ENCODE measurements at regions of chr12 and their contacts with region 1.

Region 1: GRCh38 chr12:31659087-31659933 is at the start of gene ETFBKMT:
- DNase-seq: peak; percentile 96
- H3K4me3 Mint-ChIP-seq: peak within 1 kb of the TSS; percentile 94
- H3K27ac Mint-ChIP-seq: peak within 1 kb of the TSS; percentile 98
- H3K4me1 Mint-ChIP-seq: peaks cover 11% of the 10 kb centered on the region
- H3K27me3 Mint-ChIP-seq: no peaks in the 10 kb centered on the region
- total RNA-seq, gene ETFBKMT: 0.91 to 1.2 TPM

Region 2: DNA sequence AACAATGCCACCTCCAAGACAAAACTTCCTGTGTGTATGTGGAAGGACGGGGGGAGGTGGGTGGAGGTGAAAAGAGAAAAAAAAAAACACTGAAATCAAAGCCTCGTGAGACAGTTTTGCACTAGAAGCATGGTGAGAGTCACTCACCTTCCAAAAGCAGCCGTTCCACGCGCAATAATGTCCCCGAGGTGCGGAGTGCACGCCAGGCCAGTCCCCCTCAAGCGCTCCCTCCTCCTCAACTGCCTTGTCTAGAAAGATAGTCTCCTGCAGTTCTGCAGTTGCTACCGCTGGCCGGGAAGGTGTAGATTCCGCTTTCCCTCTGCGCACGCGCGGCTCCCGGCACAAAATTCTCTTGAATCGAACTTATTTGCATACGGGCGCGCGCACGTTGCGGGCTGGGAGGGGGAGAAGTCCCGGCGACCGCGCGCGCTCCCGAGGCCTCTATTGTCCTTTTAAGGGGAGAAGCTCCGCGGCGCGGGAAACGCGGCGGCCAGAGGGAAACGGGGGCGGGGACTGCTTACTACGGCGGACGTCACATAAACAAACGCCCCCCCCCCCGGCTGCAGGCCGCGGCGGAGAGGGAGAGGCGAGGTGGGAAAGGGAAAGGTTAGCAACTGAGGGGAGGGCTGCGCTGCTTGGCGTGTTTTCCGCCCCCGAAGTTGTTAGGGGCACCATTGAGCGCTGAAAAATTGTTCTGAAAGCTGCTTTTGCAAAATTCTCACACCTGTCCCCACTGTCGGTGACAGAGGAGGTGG is 333.3 kb before region 1 on chr12 and contains the start of gene SINHCAF:
- CTCF ChIA-PET with region 1: no interaction called
- intact Hi-C with region 1: loop called (anchors 1 kb)
- DNase-seq: peak; percentile 99
- H3K4me3 Mint-ChIP-seq: peak within 1 kb of the TSS; percentile 96
- H3K27ac Mint-ChIP-seq: peak within 1 kb of the TSS; percentile 99
- H3K4me1 Mint-ChIP-seq: peaks cover 20% of the 10 kb centered on the region
- H3K27me3 Mint-ChIP-seq: no peaks in the 10 kb centered on the region
- total RNA-seq, gene SINHCAF: 158 to 169 TPM

Region 3: DNA sequence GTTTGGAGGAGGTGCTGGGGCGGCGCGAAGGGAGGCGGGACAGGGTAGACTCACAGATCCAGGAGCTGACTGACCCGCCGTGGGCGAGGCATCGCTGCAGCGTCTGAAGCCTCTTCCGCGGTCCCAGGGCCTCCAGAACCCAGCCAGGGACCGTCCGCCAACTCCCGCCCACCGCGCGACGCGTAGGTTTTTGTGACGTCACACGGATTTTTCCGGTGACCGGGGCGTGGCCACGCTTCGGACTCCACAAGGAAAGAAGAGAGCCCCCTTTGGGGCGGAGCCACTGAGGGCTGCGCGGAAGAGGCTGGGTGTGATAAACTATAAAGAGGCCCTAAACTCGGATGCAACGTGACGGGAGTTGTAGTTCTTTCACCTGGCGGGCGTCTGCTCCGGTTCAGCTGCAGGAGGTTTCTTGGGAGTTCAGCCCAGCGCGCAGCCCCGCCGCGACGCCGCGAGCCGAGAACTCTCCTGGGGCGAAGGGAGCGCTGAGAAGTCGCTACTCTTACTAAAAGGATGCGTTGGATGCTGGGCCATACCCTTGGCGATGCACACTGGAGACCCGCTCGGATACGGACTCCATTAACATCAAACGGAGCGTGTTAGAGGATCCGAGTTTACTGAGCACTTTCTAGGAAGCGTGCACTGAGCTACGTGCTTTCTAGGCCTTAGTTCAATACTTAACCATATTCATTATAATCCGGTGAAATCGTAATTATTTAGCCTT is 69.8 kb after region 1 on chr12 and contains the start of gene AMN1:
- CTCF ChIA-PET with region 1: no interaction called
- intact Hi-C with region 1: loop called (anchors 1 kb)
- DNase-seq: peak; percentile 99
- H3K4me3 Mint-ChIP-seq: peak within 1 kb of the TSS; percentile 95
- H3K27ac Mint-ChIP-seq: peak within 1 kb of the TSS; percentile 97
- H3K4me1 Mint-ChIP-seq: peaks cover 38% of the 10 kb centered on the region
- H3K27me3 Mint-ChIP-seq: no peaks in the 10 kb centered on the region
- total RNA-seq, gene AMN1: 6.6 to 8.0 TPM

Region 4: GRCh38 chr12:31749024-31749704 is 89.9 kb after region 1 on chr12:
- CTCF ChIA-PET with region 1: no interaction called
- intact Hi-C with region 1: loop called (anchors 1 kb)
- DNase-seq: peak; percentile 88
- H3K4me3 Mint-ChIP-seq: no peak overlapping the region
- H3K27ac Mint-ChIP-seq: peak overlapping the region; percentile 76
- H3K4me1 Mint-ChIP-seq: peaks cover 63% of the 10 kb centered on the region
- H3K27me3 Mint-ChIP-seq: no peaks in the 10 kb centered on the region

Region 5: GRCh38 chr12:31966558-31967205 is 307.4 kb after region 1 on chr12:
- CTCF ChIA-PET with region 1: interaction called, 7 read pairs
- intact Hi-C with region 1: loop called (anchors 1 kb)
- DNase-seq: peak; percentile 41
- H3K4me3 Mint-ChIP-seq: peak overlapping the region; percentile 55
- H3K27ac Mint-ChIP-seq: peak overlapping the region; percentile 99
- H3K4me1 Mint-ChIP-seq: peaks cover 76% of the 10 kb centered on the region
- H3K27me3 Mint-ChIP-seq: no peaks in the 10 kb centered on the region

Region 6: GRCh38 chr12:32302218-32303173 is 643.2 kb after region 1 on chr12:
- CTCF ChIA-PET with region 1: interaction called, 29 read pairs
- intact Hi-C with region 1: no loop called
- DNase-seq: no peak
- H3K4me3 Mint-ChIP-seq: no peak overlapping the region
- H3K27ac Mint-ChIP-seq: no peak overlapping the region
- H3K4me1 Mint-ChIP-seq: no peaks in the 10 kb centered on the region
- H3K27me3 Mint-ChIP-seq: no peaks in the 10 kb centered on the region

Region 7: DNA sequence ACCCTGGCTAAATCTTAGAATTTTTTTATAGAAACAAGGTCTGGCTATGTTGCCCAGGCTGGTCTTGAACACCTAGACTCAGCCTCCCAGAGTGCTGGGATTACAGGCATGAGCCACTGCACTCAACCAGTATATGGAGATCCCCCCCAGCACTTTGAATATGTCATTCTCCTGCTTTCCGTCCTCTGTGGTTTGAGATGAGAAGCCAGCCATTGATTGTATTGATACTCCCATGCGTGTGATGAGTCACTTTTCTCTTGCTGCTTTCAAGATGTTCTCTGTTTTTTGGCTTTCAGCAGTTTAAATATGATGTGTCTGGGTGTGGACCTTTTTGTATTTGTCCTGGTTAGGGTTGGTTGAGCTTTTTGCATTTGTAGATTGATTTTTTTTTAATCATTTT is 944.5 kb after region 1 on chr12:
- CTCF ChIA-PET with region 1: no interaction called
- intact Hi-C with region 1: loop called (anchors 5 kb)
- DNase-seq: peak; percentile 73
- H3K4me3 Mint-ChIP-seq: no peak overlapping the region
- H3K27ac Mint-ChIP-seq: peak overlapping the region; percentile 57
- H3K4me1 Mint-ChIP-seq: peaks cover 8% of the 10 kb centered on the region
- H3K27me3 Mint-ChIP-seq: no peaks in the 10 kb centered on the region